Activated B cell treated with CpG ODN at 0.5 μM for 24 hours (primary cell): ENCODE measurements at regions of chr3 and their contacts with region 1.

Region 1: GRCh38 chr3:158790901-158791589 is 10.8 kb upstream of the MFSD1 start:
- DNase-seq: no peak
- ATAC-seq: peak; percentile 56
- H3K4me3 Mint-ChIP-seq: peak overlapping the region; percentile 77
- H3K27ac Mint-ChIP-seq: no peak overlapping the region
- H3K4me1 Mint-ChIP-seq: peaks cover 3% of the 10 kb centered on the region
- H3K27me3 Mint-ChIP-seq: peaks cover 2% of the 10 kb centered on the region
- CTCF ChIP-seq: no peak

Region 2: DNA sequence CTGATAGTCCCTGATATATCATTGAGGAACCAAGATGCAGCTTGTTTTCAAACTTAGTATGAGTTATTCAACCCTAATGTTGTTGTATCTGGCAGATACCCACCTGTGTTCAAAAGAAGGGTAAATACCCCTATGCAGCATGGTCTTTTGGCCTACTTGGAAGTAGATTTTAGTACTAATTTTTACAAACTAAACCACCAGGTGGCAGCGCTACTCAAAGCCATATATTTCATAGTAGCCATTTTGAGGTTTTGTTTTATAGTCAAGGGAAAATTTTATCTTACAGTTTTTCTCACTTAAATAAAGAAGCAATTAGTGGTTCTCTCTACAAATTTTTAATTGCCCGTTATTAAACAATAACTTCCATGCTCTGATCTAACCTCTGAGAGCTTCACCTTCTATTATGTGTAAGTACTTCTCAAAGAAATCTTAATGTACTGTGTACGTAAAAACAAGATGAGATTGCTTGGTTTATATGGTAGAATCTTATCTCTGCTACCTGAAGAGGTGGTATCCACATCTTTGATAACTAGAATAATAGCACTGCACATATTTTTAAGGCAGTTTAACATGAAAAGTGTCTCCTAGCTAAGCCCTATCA is 251.5 kb before region 1 on chr3:
- CTCF ChIA-PET with region 1: interaction called, 4 read pairs
- POLR2A ChIA-PET with region 1: no interaction called
- intact Hi-C with region 1: loop called (anchors 1 kb)
- DNase-seq: no peak
- ATAC-seq: no peak
- H3K4me3 Mint-ChIP-seq: no peak overlapping the region
- H3K27ac Mint-ChIP-seq: no peak overlapping the region
- H3K4me1 Mint-ChIP-seq: no peaks in the 10 kb centered on the region
- H3K27me3 Mint-ChIP-seq: no peaks in the 10 kb centered on the region
- CTCF ChIP-seq: peak; percentile 50

Region 3: DNA sequence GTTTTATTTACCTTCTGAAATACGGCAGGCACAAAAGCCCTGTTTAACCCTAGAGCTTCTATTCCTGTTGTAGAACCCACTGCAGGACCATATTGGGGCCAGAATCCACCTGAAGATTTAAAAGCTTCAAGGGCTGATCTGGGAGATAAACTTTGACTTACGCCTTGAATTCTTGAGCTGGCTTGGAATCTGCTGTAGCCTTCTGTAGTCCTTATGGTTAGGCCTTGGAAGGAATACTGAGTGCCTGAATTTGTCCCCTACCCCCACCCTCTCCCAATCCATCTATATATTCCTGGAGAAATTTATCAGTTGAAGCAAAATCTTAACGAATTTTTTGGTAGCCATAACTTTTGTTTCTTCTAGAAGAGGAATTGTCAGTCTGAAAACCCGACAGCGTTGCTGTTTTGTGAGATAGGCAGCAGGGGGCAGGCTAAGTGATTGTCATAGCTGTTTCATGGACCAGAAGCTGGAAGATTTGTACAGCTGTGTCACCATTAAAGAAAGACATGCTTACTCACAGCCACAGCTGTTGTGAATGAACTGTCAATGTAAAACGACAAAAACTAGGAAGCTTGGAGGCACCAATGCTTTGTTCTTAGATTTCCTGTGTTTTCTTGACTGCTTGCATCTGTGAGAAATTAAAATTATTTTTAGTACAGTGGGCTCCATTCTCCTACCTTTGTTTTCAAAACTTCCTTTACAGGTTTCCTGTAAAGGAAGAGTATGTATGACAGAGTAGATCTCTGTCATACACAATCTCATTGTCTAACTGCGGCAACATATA is 131.4 kb before region 1 on chr3:
- CTCF ChIA-PET with region 1: interaction called, 20 read pairs
- POLR2A ChIA-PET with region 1: no interaction called
- intact Hi-C with region 1: loop called (anchors 1 kb)
- DNase-seq: no peak
- ATAC-seq: peak; percentile 62
- H3K4me3 Mint-ChIP-seq: no peak overlapping the region
- H3K27ac Mint-ChIP-seq: no peak overlapping the region
- H3K4me1 Mint-ChIP-seq: no peaks in the 10 kb centered on the region
- H3K27me3 Mint-ChIP-seq: no peaks in the 10 kb centered on the region
- CTCF ChIP-seq: peak; percentile 17

Region 4: GRCh38 chr3:158727206-158728060 is 63.6 kb before region 1 on chr3:
- CTCF ChIA-PET with region 1: interaction called, 98 read pairs
- POLR2A ChIA-PET with region 1: no interaction called
- intact Hi-C with region 1: loop called (anchors 1 kb)
- DNase-seq: no peak
- ATAC-seq: peak; percentile 62
- H3K4me3 Mint-ChIP-seq: no peak overlapping the region
- H3K27ac Mint-ChIP-seq: no peak overlapping the region
- H3K4me1 Mint-ChIP-seq: peaks cover 28% of the 10 kb centered on the region
- H3K27me3 Mint-ChIP-seq: no peaks in the 10 kb centered on the region
- CTCF ChIP-seq: peak; percentile 17

Region 5: GRCh38 chr3:160003520-160004128 is 1212.6 kb after region 1 on chr3:
- CTCF ChIA-PET with region 1: no interaction called
- POLR2A ChIA-PET with region 1: no interaction called
- intact Hi-C with region 1: loop called (anchors 10 kb)
- DNase-seq: peak; percentile 38
- ATAC-seq: peak; percentile 92
- H3K4me3 Mint-ChIP-seq: no peak overlapping the region
- H3K27ac Mint-ChIP-seq: no peak overlapping the region
- H3K4me1 Mint-ChIP-seq: peaks cover 10% of the 10 kb centered on the region
- H3K27me3 Mint-ChIP-seq: no peaks in the 10 kb centered on the region
- CTCF ChIP-seq: no peak